ENCODE measurements at regions of chr10 and their contacts with region 1.

Region 1: DNA sequence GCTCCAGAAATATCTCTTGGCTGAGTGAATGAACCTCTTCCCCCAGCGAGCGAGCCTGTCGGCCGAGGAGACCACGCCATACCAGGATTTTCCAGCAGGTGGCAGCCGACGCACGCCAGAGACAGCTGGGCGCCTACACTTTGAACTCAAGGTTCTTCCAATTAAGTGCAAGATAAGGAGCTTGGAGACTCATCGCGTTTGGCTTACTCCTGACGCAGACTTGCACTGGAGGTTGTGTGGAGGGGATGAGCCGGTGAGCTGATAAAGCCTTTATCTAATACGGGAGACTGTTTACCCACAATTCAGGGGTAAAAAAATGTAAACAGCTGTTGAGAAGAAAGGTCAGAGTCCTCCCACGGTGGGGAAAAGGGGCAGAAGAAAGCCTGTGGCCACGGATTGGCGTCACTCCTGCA is 45.9 kb upstream of the EMX2 start:
- DNase-seq: peak; percentile 88

Region 2: DNA sequence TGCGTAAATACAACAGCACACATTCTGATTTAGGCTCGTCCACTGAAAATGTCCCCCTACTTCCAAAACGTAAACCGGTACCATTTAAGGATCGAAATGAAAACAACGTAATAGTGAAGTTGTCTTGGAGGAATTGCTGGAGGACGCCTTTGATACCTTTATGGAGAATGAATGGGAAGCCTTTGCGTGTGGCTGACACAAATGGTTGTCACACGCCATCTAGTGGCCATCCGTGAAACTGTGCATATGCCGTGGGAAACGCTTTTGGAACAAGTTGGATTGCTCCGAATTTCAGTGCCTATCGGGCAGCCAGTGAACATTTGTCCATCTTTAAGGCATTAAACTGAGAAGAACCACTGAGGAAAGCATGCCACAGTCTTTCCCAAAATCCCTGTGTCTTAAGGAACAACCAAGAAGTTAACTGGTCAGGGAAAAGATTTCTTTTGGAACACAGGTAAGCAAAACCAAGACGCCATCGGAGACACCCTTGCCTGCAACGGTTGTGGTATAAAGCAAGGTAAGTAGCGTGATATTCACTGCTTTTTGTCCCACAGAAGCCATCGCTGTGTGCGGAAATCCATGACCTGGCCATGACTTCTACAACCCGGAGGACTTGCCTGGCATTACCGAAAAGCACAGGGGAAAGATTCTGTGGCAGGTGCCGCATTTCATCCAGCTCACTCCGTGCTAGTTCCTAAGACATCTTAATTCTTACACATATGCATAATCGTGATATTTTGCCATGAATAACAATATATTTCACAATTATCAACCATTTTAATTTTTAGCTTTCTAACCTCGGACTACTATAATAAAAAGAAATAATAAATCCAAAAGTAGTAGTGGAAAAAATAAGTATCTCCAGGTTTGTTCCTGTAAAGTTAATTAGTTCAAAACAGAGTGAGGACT is 744.9 kb after region 1 on chr10:
- intact Hi-C with region 1: loop called (anchors 2 kb)
- DNase-seq: peak; percentile 80

Region 3: GRCh38 chr10:118423800-118424479 is 927.3 kb after region 1 on chr10:
- intact Hi-C with region 1: loop called (anchors 10 kb)
- DNase-seq: peak; percentile 77